GM12878 (cell line): ENCODE measurements at regions of chr18 and their contacts with region 1.

Region 1: DNA sequence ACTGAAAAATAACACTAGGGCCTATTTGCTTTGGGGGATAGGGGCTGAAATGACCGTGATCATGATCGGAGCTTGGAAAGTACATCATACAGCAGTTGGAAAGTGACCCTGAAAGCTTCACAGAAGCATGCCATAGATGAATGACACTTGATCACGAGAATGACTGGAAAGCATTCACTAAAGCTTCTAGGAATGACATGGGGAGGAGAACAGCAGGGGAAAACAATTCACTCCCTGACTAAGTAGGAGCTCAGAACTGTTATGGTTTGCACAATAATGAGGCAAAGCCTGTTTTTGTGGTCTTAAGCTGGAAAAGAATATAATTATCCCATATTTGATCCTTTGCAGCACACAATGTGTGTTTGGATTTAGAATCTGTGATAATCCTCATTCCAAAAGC is 237.5 kb downstream of the NOL4 start:
- DNase-seq: no peak
- ATAC-seq: no peak
- H3K4me3 ChIP-seq: no peak overlapping the region
- H3K27ac ChIP-seq: no peak overlapping the region
- H3K4me1 ChIP-seq: no peaks in the 10 kb centered on the region
- H3K27me3 ChIP-seq: no peaks in the 10 kb centered on the region
- CTCF ChIP-seq: no peak
- EP300 ChIP-seq: no peak
- POLR2A ChIP-seq: no peak
- RAD21 ChIP-seq: no peak

Region 2: GRCh38 chr18:33944493-33944892 is 42.7 kb before region 1 on chr18:
- CTCF ChIA-PET with region 1: no interaction called
- POLR2A ChIA-PET with region 1: no interaction called
- RAD21 ChIA-PET with region 1: no interaction called
- SMC1A ChIA-PET with region 1: no interaction called
- in situ Hi-C with region 1: no loop called
- intact Hi-C with region 1: loop called (anchors 5 kb)
- DNase-seq: no peak
- ATAC-seq: no peak
- H3K4me3 ChIP-seq: no peak overlapping the region
- H3K27ac ChIP-seq: no peak overlapping the region
- H3K4me1 ChIP-seq: no peaks in the 10 kb centered on the region
- H3K27me3 ChIP-seq: no peaks in the 10 kb centered on the region
- CTCF ChIP-seq: no peak
- EP300 ChIP-seq: no peak
- POLR2A ChIP-seq: no peak
- RAD21 ChIP-seq: no peak

Region 3: GRCh38 chr18:35174093-35174731 is 1187.0 kb after region 1 on chr18:
- CTCF ChIA-PET with region 1: no interaction called
- POLR2A ChIA-PET with region 1: no interaction called
- RAD21 ChIA-PET with region 1: no interaction called
- SMC1A ChIA-PET with region 1: no interaction called
- in situ Hi-C with region 1: no loop called
- intact Hi-C with region 1: no loop called
- DNase-seq: peak; percentile 25
- ATAC-seq: peak; percentile 97
- H3K4me3 ChIP-seq: no peak overlapping the region
- H3K27ac ChIP-seq: no peak overlapping the region
- H3K4me1 ChIP-seq: no peaks in the 10 kb centered on the region
- H3K27me3 ChIP-seq: no peaks in the 10 kb centered on the region
- CTCF ChIP-seq: no peak
- EP300 ChIP-seq: peak in 1 of 2 experiments; percentile 72; a peak in 1 of 4 replicates
- POLR2A ChIP-seq: no peak
- RAD21 ChIP-seq: no peak